ENCODE measurements at regions of chr3 and their contacts with region 1.

Region 1: DNA sequence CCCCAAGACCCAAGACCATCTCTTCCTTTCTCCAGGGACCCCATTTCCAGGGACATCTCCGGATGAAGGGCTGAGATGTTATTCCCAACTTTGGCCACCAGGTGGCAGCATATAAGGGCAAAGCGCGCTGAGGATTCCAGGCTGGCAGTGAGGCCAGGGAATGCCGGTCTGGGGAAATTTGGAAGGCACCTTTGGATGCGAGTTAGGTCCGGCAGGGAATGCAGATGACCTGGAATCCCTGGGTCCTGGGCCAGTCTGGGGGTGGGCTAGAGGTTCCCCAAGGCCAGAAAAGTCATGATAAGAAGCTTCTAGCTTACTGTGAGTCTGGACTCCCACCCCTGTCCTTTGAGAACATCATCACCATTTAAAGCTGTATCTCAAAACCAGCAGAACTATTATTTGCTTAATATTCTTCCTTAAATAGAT is 1.6 kb upstream of the CHST13 start:
- DNase-seq: peak; percentile 73
- H3K4me3 ChIP-seq: no peak overlapping the region
- H3K27ac ChIP-seq: no peak overlapping the region
- H3K4me1 ChIP-seq: peaks cover 6% of the 10 kb centered on the region
- H3K27me3 ChIP-seq: peaks cover 6% of the 10 kb centered on the region
- CTCF ChIP-seq: peak; percentile 83

Region 2: DNA sequence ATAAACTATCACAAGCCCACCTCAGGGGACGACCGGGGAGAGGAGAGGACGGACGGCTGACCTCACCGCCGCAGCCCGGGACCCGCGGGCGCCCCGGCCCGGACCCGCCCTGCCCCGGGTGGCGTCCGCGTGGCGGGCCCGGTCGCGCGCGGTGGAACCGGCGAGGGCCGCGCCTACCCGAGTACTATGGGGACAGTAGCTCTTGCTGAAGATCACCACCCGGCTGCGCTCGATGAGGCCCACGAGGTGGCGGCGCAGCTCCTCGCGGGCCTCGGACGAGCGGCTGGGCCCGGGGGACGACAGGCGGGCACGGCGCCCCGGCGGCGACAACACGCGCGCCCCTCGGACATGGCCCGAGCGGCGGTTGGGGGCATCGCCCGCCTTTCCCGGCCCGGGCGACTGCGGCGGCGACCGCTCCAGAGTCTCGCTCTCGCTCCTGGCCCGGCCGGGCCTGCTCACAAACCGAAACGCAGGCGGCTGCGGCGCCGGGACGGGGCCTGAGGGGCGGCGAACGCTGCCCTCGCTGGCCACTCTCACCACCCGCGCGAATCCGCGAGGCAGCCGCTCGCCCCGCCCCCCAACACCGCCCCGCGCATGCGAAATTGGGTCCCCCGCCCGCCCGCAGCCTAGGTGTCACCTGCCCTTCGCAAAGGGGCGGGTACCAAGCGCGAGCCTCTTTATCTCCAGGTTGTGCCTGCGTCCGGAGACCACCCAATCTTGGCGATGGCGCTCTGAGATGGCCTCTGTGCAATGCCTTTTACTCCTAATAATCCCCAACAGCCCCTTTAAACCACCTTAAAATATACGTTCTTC is 132.4 kb after region 1 on chr3 and contains the start of gene TXNRD3:
- CTCF ChIA-PET with region 1: no interaction called
- POLR2A ChIA-PET with region 1: no interaction called
- intact Hi-C with region 1: loop called (anchors 10 kb)
- DNase-seq: peak; percentile 59
- H3K4me3 ChIP-seq: peak within 1 kb of the TSS; percentile 60
- H3K27ac ChIP-seq: peak within 1 kb of the TSS; percentile 64
- H3K4me1 ChIP-seq: no peaks in the 10 kb centered on the region
- H3K27me3 ChIP-seq: no peaks in the 10 kb centered on the region
- CTCF ChIP-seq: no peak
- total RNA-seq, gene TXNRD3: 4.1 and 5.5 TPM in 2 replicates

Measured in A673 (cell line).